OCI-LY7 (cell line): ENCODE measurements at regions of chr6 and their contacts with region 1.

Region 1: DNA sequence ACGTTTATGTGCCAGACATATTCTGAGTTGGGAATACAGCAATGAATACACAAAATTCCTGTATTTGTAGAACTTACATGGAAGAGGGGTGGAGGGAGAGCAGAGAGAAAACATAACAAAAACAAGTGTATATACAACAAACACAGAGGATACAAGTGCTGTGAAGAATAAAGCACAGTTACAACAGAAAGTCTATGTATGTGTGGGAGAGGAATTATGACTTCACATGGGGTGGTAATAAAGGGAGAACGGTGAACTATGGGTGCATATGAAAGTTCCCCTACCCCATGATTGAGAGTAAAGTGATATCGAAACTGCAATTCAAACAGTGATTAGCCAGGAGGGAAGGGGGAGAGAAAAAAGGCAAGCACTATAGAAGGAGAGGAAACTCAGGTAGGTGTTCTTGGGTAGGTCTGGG is 24.6 kb downstream of the HBS1L start:
- DNase-seq: no peak
- H3K4me3 ChIP-seq: no peak overlapping the region
- H3K27ac ChIP-seq: no peak overlapping the region
- H3K4me1 ChIP-seq: no peaks in the 10 kb centered on the region
- CTCF ChIP-seq: no peak

Region 2: GRCh38 chr6:134589512-134589911 is 440.6 kb before region 1 on chr6:
- CTCF ChIA-PET with region 1: no interaction called
- POLR2A ChIA-PET with region 1: no interaction called
- intact Hi-C with region 1: no loop called
- DNase-seq: no peak
- H3K4me3 ChIP-seq: no peak overlapping the region
- H3K27ac ChIP-seq: no peak overlapping the region
- H3K4me1 ChIP-seq: no peaks in the 10 kb centered on the region
- CTCF ChIP-seq: no peak

Region 3: DNA sequence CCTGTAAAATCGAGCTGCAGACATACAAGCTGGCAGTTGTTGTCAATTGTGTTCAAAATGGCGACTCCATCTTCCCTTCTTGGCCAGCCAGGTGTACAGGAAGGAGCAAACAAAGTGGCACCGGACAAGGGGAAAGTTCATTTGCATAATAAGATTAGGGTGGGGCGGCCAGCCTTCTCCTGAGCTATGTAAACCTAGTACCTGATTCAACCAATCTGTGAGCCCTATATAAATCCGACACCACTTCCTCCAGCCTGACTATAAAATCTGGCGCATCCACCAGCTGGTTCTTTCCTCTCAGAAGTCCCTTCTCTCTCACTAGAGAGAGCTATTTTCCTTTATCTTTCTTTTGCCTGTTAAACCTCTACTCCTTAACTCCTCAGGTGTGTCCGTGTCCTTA is 32.7 kb after region 1 on chr6:
- CTCF ChIA-PET with region 1: no interaction called
- POLR2A ChIA-PET with region 1: interaction called, 14 read pairs
- intact Hi-C with region 1: no loop called
- DNase-seq: peak; percentile 75
- H3K4me3 ChIP-seq: peak overlapping the region; percentile 24
- H3K27ac ChIP-seq: no peak overlapping the region
- H3K4me1 ChIP-seq: peaks cover 13% of the 10 kb centered on the region
- CTCF ChIP-seq: 0 out of 2 replicates have a peak, but pooled peaks have one; percentile 29